ENCODE measurements at regions of chr7 and their contacts with region 1.

Region 1: GRCh38 chr7:140810830-140811556 is 113.7 kb downstream of the BRAF start:
- DNase-seq: peak; percentile 73 to 81
- H3K4me3 ChIP-seq: no peak overlapping the region
- H3K4me3 Mint-ChIP-seq: no peak overlapping the region
- H3K27ac Mint-ChIP-seq: no peak overlapping the region
- H3K4me1 ChIP-seq: no peaks in the 10 kb centered on the region
- H3K4me1 Mint-ChIP-seq: peaks cover 6% of the 10 kb centered on the region
- H3K27me3 ChIP-seq: no peaks in the 10 kb centered on the region
- H3K27me3 Mint-ChIP-seq: no peaks in the 10 kb centered on the region
- CTCF ChIP-seq: peak; percentile 63 to 75

Region 2: GRCh38 chr7:140646931-140647647 is 163.9 kb before region 1 on chr7:
- CTCF ChIA-PET with region 1: no interaction called
- POLR2A ChIA-PET with region 1: no interaction called
- intact Hi-C with region 1: no loop called
- DNase-seq: peak; percentile 59 to 63
- H3K4me3 ChIP-seq: no peak overlapping the region
- H3K4me3 Mint-ChIP-seq: no peak overlapping the region
- H3K27ac Mint-ChIP-seq: no peak overlapping the region
- H3K4me1 ChIP-seq: no peaks in the 10 kb centered on the region
- H3K4me1 Mint-ChIP-seq: no peaks in the 10 kb centered on the region
- H3K27me3 ChIP-seq: no peaks in the 10 kb centered on the region
- H3K27me3 Mint-ChIP-seq: peaks cover 3% of the 10 kb centered on the region
- CTCF ChIP-seq: peak; percentile 53 to 86

Region 3: GRCh38 chr7:140914083-140914482 is 103.1 kb after region 1 on chr7:
- CTCF ChIA-PET with region 1: no interaction called
- POLR2A ChIA-PET with region 1: no interaction called
- intact Hi-C with region 1: loop called (anchors 2 kb)
- DNase-seq: no peak
- H3K4me3 ChIP-seq: no peak overlapping the region
- H3K4me3 Mint-ChIP-seq: no peak overlapping the region
- H3K27ac Mint-ChIP-seq: no peak overlapping the region
- H3K4me1 ChIP-seq: peaks cover 27% of the 10 kb centered on the region
- H3K4me1 Mint-ChIP-seq: peaks cover 28% of the 10 kb centered on the region
- H3K27me3 ChIP-seq: no peaks in the 10 kb centered on the region
- H3K27me3 Mint-ChIP-seq: no peaks in the 10 kb centered on the region
- CTCF ChIP-seq: no peak

Region 4: DNA sequence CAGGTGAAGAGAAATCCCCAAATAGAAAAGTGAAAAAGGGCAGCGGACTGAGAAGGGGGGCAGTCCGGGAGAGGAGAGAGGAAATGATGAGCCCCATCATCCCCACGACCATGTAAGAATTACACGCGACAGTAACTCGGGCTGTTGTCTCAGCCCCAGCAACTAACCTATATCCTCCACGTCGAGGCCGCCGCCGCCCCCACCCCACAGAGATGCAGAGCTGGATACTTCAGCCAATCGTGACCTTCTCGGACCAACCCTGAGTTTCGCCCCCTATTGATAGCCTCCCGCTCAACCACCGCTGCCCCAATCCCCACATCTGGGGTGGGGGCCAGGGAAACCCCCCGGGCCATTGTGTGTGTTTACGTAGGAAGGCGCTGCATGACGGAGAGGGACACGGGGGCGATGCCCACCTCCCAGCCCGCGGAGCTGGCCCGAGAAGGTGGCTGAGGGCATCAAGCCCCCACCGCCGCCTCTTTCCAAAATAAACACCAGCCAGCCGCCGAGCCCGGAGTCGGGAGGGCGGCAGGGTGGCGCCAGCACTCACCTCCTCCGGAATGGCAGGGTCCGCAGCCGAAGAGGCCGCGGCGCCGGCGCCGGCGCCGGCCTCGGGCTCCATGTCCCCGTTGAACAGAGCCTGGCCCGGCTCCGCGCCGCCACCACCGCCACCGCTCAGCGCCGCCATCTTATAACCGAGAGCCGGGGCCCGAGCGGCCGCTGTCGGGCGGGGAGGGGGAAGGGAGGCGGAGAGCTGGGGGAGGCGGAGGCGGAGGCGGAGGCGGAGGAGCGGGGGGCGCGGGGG is 113.2 kb after region 1 on chr7:
- CTCF ChIA-PET with region 1: interaction called, 12 read pairs
- POLR2A ChIA-PET with region 1: no interaction called
- intact Hi-C with region 1: loop called (anchors 1 kb)
- DNase-seq: peak; percentile 81 to 83
- H3K4me3 ChIP-seq: peak overlapping the region; percentile 71
- H3K4me3 Mint-ChIP-seq: no peak overlapping the region
- H3K27ac Mint-ChIP-seq: no peak overlapping the region
- H3K4me1 ChIP-seq: no peaks in the 10 kb centered on the region
- H3K4me1 Mint-ChIP-seq: no peaks in the 10 kb centered on the region
- H3K27me3 ChIP-seq: no peaks in the 10 kb centered on the region
- H3K27me3 Mint-ChIP-seq: no peaks in the 10 kb centered on the region
- CTCF ChIP-seq: peak; percentile 47 to 57

Region 5: GRCh38 chr7:140983802-140984201 is 172.8 kb after region 1 on chr7:
- CTCF ChIA-PET with region 1: interaction called, 14 read pairs
- POLR2A ChIA-PET with region 1: no interaction called
- intact Hi-C with region 1: loop called (anchors 1 kb)
- DNase-seq: no peak
- H3K4me3 ChIP-seq: no peak overlapping the region
- H3K4me3 Mint-ChIP-seq: no peak overlapping the region
- H3K27ac Mint-ChIP-seq: no peak overlapping the region
- H3K4me1 ChIP-seq: peaks cover 7% of the 10 kb centered on the region
- H3K4me1 Mint-ChIP-seq: no peaks in the 10 kb centered on the region
- H3K27me3 ChIP-seq: no peaks in the 10 kb centered on the region
- H3K27me3 Mint-ChIP-seq: no peaks in the 10 kb centered on the region
- CTCF ChIP-seq: peak; percentile 8 to 45

Region 6: GRCh38 chr7:141231018-141231792 is 420.2 kb after region 1 on chr7:
- CTCF ChIA-PET with region 1: interaction called, 4 read pairs
- POLR2A ChIA-PET with region 1: no interaction called
- intact Hi-C with region 1: loop called (anchors 5 kb)
- DNase-seq: peak; percentile 48 to 49
- H3K4me3 ChIP-seq: no peak overlapping the region
- H3K4me3 Mint-ChIP-seq: no peak overlapping the region
- H3K27ac Mint-ChIP-seq: no peak overlapping the region
- H3K4me1 ChIP-seq: no peaks in the 10 kb centered on the region
- H3K4me1 Mint-ChIP-seq: no peaks in the 10 kb centered on the region
- H3K27me3 ChIP-seq: peaks cover 2% of the 10 kb centered on the region
- H3K27me3 Mint-ChIP-seq: peaks cover 11% of the 10 kb centered on the region
- CTCF ChIP-seq: peak; percentile 29 to 66

Region 7: GRCh38 chr7:141533149-141533949 is 722.4 kb after region 1 on chr7:
- CTCF ChIA-PET with region 1: no interaction called
- POLR2A ChIA-PET with region 1: no interaction called
- intact Hi-C with region 1: loop called (anchors 10 kb)
- DNase-seq: peak; percentile 46 to 70
- H3K4me3 ChIP-seq: no peak overlapping the region
- H3K4me3 Mint-ChIP-seq: no peak overlapping the region
- H3K27ac Mint-ChIP-seq: no peak overlapping the region
- H3K4me1 ChIP-seq: no peaks in the 10 kb centered on the region
- H3K4me1 Mint-ChIP-seq: no peaks in the 10 kb centered on the region
- H3K27me3 ChIP-seq: peaks cover 3% of the 10 kb centered on the region
- H3K27me3 Mint-ChIP-seq: peaks cover 13% of the 10 kb centered on the region
- CTCF ChIP-seq: peak; percentile 91 to 96

Measured in Caco-2 (cell line).